HEK293 (cell line): ENCODE measurements at regions of chr20 and their contacts with region 1.

Region 1: GRCh38 chr20:6008254-6008653 is 45.6 kb downstream of the LRRN4 start:
- H3K4me3 ChIP-seq: peak overlapping the region; percentile 3; the same call in 1 of the 2 replicates
- H3K27ac ChIP-seq: no peak overlapping the region
- H3K4me1 ChIP-seq: no peaks in the 10 kb centered on the region
- CTCF ChIP-seq: no peak

Region 2: GRCh38 chr20:6074145-6074561 is 65.9 kb after region 1 on chr20:
- CTCF ChIA-PET with region 1: interaction called, 13 read pairs
- POLR2A ChIA-PET with region 1: no interaction called
- H3K4me3 ChIP-seq: no peak overlapping the region
- H3K27ac ChIP-seq: no peak overlapping the region
- H3K4me1 ChIP-seq: no peaks in the 10 kb centered on the region
- CTCF ChIP-seq: no peak